Activated CD8-positive, alpha-beta T cell treated with anti-CD3 and anti-CD28 coated beads for 36 hours (primary cell): ENCODE measurements at regions of chr12 and their contacts with region 1.

Region 1: GRCh38 chr12:46459861-46460545 is 87.4 kb upstream of the SLC38A2 start:
- DNase-seq: peak; percentile 15
- ATAC-seq: no peak
- H3K4me3 Mint-ChIP-seq: peak overlapping the region; percentile 45
- H3K27ac Mint-ChIP-seq: peak overlapping the region; percentile 97
- H3K4me1 Mint-ChIP-seq: peaks cover 61% of the 10 kb centered on the region
- H3K27me3 Mint-ChIP-seq: no peaks in the 10 kb centered on the region
- CTCF ChIP-seq: no peak

Region 2: GRCh38 chr12:46556105-46556559 is 96.1 kb after region 1 on chr12:
- CTCF ChIA-PET with region 1: no interaction called
- POLR2A ChIA-PET with region 1: interaction called, 3 read pairs
- intact Hi-C with region 1: loop called (anchors 10 kb)
- DNase-seq: no peak
- ATAC-seq: no peak
- H3K4me3 Mint-ChIP-seq: no peak overlapping the region
- H3K27ac Mint-ChIP-seq: no peak overlapping the region
- H3K4me1 Mint-ChIP-seq: peaks cover 30% of the 10 kb centered on the region
- H3K27me3 Mint-ChIP-seq: no peaks in the 10 kb centered on the region
- CTCF ChIP-seq: no peak